ENCODE measurements at regions of chr11 and their contacts with region 1.

Region 1: GRCh38 chr11:125923012-125923579 is 18.8 kb downstream of the DDX25 start:
- DNase-seq: peak; percentile 70 to 88
- H3K4me3 ChIP-seq: no peak overlapping the region
- CTCF ChIP-seq: peak in 1 of 3 donors; percentile 32
- POLR2A ChIP-seq: no peak

Region 2: DNA sequence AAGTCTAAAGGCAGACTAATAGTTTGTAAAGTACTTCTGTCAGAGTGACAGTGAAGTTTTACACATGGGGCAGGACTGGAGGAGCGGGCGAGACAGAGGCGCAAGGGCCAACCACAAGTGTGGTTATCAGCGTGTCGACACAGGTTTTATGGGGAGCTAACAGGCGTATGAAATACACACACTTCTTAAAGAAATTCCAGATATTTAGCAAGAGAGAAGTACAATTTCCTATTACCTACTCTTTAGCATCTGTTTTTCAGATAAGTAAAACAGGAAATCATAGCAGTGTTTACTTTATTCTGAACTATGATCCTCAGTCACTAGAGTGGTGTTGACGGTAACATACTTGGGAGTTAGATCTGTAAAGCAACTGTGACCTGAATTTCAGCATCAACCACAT is 45.3 kb after region 1 on chr11:
- intact Hi-C with region 1: no loop called
- DNase-seq: no peak
- H3K4me3 ChIP-seq: no peak overlapping the region
- CTCF ChIP-seq: no peak
- POLR2A ChIP-seq: no peak

Region 3: GRCh38 chr11:126194121-126194543 is 271.0 kb after region 1 on chr11:
- intact Hi-C with region 1: loop called (anchors 5 kb)
- DNase-seq: no peak
- H3K4me3 ChIP-seq: no peak overlapping the region
- CTCF ChIP-seq: peak in 1 of 3 donors; percentile 58
- POLR2A ChIP-seq: no peak